ENCODE measurements at regions of chr7 and their contacts with region 1.

Region 1: DNA sequence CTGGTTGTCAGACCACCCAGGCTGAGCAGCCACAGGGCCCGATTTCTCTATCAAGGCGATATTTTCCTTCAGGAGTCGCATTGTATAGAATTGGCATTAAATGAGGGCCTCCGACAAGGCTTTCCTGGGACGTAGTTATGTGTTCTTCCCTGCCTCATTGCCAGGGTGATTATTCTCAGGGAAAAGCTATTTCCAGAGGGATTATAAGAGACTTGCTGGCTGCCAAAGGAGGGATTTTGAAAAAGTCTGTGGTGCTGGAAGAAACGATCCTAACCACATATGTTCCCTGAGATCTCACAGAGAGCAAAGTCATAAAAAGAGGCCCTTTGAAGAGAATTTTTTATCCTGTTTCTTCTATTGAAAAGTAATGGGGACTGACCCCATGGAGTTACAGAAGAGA is 27.7 kb upstream of the SDHAF3 start:
- DNase-seq: no peak
- H3K4me3 ChIP-seq: no peak overlapping the region
- H3K27ac ChIP-seq: no peak overlapping the region
- H3K4me1 ChIP-seq: no peaks in the 10 kb centered on the region
- H3K27me3 ChIP-seq: no peaks in the 10 kb centered on the region
- CTCF ChIP-seq: no peak

Region 2: DNA sequence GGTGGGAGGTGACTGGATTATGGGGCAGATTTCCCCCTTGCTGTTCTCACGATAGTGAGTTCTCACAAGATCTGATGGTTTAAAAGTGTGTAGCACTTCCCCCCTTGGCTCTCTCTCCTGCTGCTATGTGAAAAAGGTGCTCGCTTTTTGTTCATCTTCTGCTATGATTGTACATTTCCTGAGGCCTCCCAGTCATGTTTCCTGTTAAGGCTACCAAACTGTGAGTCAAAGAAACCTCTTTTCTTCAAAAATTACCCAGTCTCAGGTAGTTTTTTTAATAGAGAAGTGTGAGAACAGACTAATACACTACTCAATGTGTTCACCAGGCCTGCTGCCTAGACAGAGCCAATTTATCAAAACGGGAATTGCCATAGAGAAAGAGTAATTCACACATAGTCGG is 77.4 kb after region 1 on chr7:
- intact Hi-C with region 1: no loop called
- DNase-seq: no peak
- H3K4me3 ChIP-seq: no peak overlapping the region
- H3K27ac ChIP-seq: no peak overlapping the region
- H3K4me1 ChIP-seq: no peaks in the 10 kb centered on the region
- H3K27me3 ChIP-seq: no peaks in the 10 kb centered on the region
- CTCF ChIP-seq: no peak

Region 3: GRCh38 chr7:97580205-97580604 is 490.4 kb after region 1 on chr7:
- intact Hi-C with region 1: loop called (anchors 5 kb)
- DNase-seq: no peak
- H3K4me3 ChIP-seq: no peak overlapping the region
- H3K27ac ChIP-seq: no peak overlapping the region
- H3K4me1 ChIP-seq: no peaks in the 10 kb centered on the region
- H3K27me3 ChIP-seq: no peaks in the 10 kb centered on the region
- CTCF ChIP-seq: no peak

Region 4: GRCh38 chr7:98066934-98067507 is 977.2 kb after region 1 on chr7:
- intact Hi-C with region 1: no loop called
- DNase-seq: no peak
- H3K4me3 ChIP-seq: no peak overlapping the region
- H3K27ac ChIP-seq: no peak overlapping the region
- H3K4me1 ChIP-seq: no peaks in the 10 kb centered on the region
- H3K27me3 ChIP-seq: no peaks in the 10 kb centered on the region
- CTCF ChIP-seq: no peak